Activated T-helper 2 cell treated with anti-CD3 and anti-CD28 coated beads, Interferon-gamma antibody, Interleukin-2, Interleukin-4, amounts not matched to agents 10 μg/mL and 5 μg/mL and 100 μg/mL, durations not matched to agents 14 hours and 24 hours and 36 hours (primary cell): ENCODE measurements at regions of chr3 and their contacts with region 1.

Region 1: DNA sequence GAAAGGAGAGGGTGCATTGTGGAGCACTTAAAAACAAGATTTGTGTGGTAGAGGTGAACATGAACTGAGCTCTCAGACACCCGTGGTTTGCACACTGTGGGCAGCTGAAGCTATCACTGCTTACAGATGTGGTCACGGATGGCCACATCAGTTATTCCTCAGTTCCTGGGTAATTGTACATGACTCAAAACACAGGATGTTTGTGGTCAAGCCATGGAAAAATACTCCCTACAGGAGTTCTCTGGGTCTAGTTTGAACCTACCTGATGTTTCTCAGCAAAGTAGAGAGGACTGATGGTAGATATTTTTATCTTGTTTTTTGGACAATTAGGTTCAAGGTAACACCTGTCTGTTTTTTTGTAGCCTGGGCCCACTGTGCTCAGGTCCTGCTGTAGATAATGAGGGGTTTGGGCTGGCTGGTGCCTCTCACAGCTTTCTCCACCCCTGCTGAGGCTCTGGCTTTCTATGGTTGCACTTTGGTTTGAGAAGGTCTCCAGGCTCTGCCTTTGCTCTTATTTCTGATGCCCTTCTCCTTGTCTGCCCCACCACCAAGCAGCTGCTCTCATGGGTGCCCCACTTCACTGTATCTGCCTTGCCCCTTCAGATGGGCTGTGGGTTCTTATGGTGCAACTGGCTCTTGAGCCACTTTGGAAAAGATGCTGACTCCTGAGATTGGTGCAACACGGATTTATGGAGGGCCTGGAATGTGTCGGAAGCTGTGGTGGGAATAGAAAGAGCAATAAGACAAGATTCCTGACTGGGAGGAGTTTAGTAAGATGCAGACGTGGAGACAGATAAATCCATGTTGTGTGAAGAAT is 40.1 kb downstream of the CDCP1 start:
- DNase-seq: peak; percentile 78
- H3K4me3 Mint-ChIP-seq: peak overlapping the region; percentile 31
- H3K27ac Mint-ChIP-seq: peak overlapping the region; percentile 86
- H3K4me1 Mint-ChIP-seq: peaks cover 73% of the 10 kb centered on the region
- H3K27me3 Mint-ChIP-seq: no peaks in the 10 kb centered on the region

Region 2: GRCh38 chr3:45064512-45065372 is 41.3 kb before region 1 on chr3:
- intact Hi-C with region 1: loop called (anchors 1 kb)
- DNase-seq: peak; percentile 69
- H3K4me3 Mint-ChIP-seq: peak overlapping the region; percentile 69
- H3K27ac Mint-ChIP-seq: peak overlapping the region; percentile 96
- H3K4me1 Mint-ChIP-seq: peaks cover 50% of the 10 kb centered on the region
- H3K27me3 Mint-ChIP-seq: peaks cover 3% of the 10 kb centered on the region

Region 3: GRCh38 chr3:45167011-45167911 is 61.2 kb after region 1 on chr3:
- intact Hi-C with region 1: loop called (anchors 1 kb)
- DNase-seq: peak; percentile 83
- H3K4me3 Mint-ChIP-seq: peak overlapping the region; percentile 58
- H3K27ac Mint-ChIP-seq: peak overlapping the region; percentile 98
- H3K4me1 Mint-ChIP-seq: peaks cover 51% of the 10 kb centered on the region
- H3K27me3 Mint-ChIP-seq: no peaks in the 10 kb centered on the region

Region 4: GRCh38 chr3:45205126-45205525 is 99.1 kb after region 1 on chr3:
- intact Hi-C with region 1: loop called (anchors 5 kb)
- DNase-seq: no peak
- H3K4me3 Mint-ChIP-seq: no peak overlapping the region
- H3K27ac Mint-ChIP-seq: no peak overlapping the region
- H3K4me1 Mint-ChIP-seq: peaks cover 24% of the 10 kb centered on the region
- H3K27me3 Mint-ChIP-seq: peaks cover 12% of the 10 kb centered on the region

Region 5: DNA sequence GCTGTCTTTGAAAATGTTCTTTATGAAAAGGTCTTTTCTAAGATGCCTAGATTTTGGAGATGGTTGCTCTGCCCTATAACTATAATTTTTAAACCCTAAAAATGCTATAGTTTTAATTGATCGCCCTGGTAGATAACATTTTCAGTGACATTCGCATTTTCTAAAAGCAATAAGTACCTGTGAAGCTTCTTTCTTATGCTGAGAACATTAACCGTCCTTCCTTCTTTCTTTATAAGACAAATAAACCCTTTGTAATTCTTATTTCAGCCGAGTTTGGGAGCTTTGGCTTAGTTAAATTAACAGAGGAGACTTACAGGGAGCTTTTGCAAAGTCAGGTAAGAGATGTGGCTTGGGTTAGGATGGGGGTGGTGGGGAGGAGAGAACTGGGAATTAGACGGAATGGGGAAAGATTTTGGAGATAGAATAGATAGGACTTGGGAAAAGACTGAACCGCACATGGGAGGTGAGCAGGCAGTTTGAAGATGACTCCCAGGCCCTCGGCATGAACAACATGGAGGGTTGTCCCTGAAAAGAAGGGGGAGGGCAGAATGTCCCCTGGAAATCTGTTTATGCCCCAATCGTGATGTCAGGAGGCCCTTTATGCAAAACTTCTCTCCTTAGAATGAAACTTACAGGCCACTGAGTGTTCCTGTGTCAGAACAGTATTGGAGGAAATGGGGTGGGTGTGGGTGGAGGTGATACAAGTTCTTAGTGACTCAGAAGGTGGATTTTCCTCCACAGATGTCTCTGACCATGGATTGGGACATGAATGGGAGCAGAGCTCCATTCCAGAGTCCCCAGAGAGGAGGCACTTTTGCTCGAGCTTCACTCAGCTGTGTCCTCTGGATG is 206.1 kb after region 1 on chr3:
- intact Hi-C with region 1: no loop called
- DNase-seq: no peak
- H3K4me3 Mint-ChIP-seq: no peak overlapping the region
- H3K27ac Mint-ChIP-seq: no peak overlapping the region
- H3K4me1 Mint-ChIP-seq: peaks cover 2% of the 10 kb centered on the region
- H3K27me3 Mint-ChIP-seq: peaks cover 7% of the 10 kb centered on the region